ENCODE measurements at regions of chr7 and their contacts with region 1.

Region 1: DNA sequence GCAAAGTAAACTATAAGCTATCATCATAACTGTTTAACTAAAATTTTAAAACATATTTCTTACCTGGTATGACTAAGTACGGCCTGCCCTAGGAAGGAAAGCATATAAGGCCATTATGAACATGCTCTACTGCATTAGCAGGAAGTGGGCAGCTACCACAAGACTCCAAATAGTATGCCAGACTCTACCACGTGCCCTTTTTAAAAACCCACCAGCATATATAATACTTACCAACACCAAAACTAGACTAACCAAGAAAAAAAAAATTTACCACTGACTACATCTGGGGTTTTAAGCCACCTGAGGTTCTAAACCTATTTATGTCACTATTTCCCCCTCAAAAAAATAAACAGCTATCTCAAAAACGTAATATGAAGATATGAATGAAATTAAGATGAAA is 30.1 kb downstream of the NUDCD3 start:
- DNase-seq: peak; percentile 52
- H3K4me3 Mint-ChIP-seq: peak overlapping the region; percentile 33
- H3K27ac Mint-ChIP-seq: peak overlapping the region; percentile 79
- H3K4me1 Mint-ChIP-seq: peaks cover 57% of the 10 kb centered on the region
- H3K27me3 Mint-ChIP-seq: no peaks in the 10 kb centered on the region

Region 2: GRCh38 chr7:44257618-44258422 is 202.5 kb before region 1 on chr7:
- intact Hi-C with region 1: loop called (anchors 5 kb)
- DNase-seq: peak; percentile 64
- H3K4me3 Mint-ChIP-seq: peak overlapping the region; percentile 9
- H3K27ac Mint-ChIP-seq: peak overlapping the region; percentile 61
- H3K4me1 Mint-ChIP-seq: peaks cover 30% of the 10 kb centered on the region
- H3K27me3 Mint-ChIP-seq: no peaks in the 10 kb centered on the region

Region 3: GRCh38 chr7:44415047-44415446 is 45.3 kb before region 1 on chr7:
- intact Hi-C with region 1: loop called (anchors 5 kb)
- DNase-seq: no peak
- H3K4me3 Mint-ChIP-seq: no peak overlapping the region
- H3K27ac Mint-ChIP-seq: peak overlapping the region; percentile 43
- H3K4me1 Mint-ChIP-seq: peaks cover 13% of the 10 kb centered on the region
- H3K27me3 Mint-ChIP-seq: no peaks in the 10 kb centered on the region

Region 4: GRCh38 chr7:44449584-44449928 is 10.8 kb before region 1 on chr7:
- intact Hi-C with region 1: loop called (anchors 1 kb)
- DNase-seq: no peak
- H3K4me3 Mint-ChIP-seq: no peak overlapping the region
- H3K27ac Mint-ChIP-seq: peak overlapping the region; percentile 46
- H3K4me1 Mint-ChIP-seq: peaks cover 27% of the 10 kb centered on the region
- H3K27me3 Mint-ChIP-seq: no peaks in the 10 kb centered on the region

Region 5: GRCh38 chr7:44490351-44491200 is 30.3 kb after region 1 on chr7 and contains the start of gene NUDCD3:
- intact Hi-C with region 1: loop called (anchors 1 kb)
- DNase-seq: peak; percentile 77
- H3K4me3 Mint-ChIP-seq: peak within 1 kb of the TSS; percentile 85
- H3K27ac Mint-ChIP-seq: peak within 1 kb of the TSS; percentile 91
- H3K4me1 Mint-ChIP-seq: peaks cover 35% of the 10 kb centered on the region
- H3K27me3 Mint-ChIP-seq: no peaks in the 10 kb centered on the region
- total RNA-seq, gene NUDCD3: 86.8 and 90.2 TPM in 2 replicates

Region 6: GRCh38 chr7:44638611-44639557 is 178.6 kb after region 1 on chr7:
- intact Hi-C with region 1: loop called (anchors 10 kb)
- DNase-seq: peak; percentile 84
- H3K4me3 Mint-ChIP-seq: peak overlapping the region; percentile 79
- H3K27ac Mint-ChIP-seq: peak overlapping the region; percentile 99
- H3K4me1 Mint-ChIP-seq: peaks cover 70% of the 10 kb centered on the region
- H3K27me3 Mint-ChIP-seq: no peaks in the 10 kb centered on the region

Measured in activated T-helper 2 cell treated with anti-CD3 and anti-CD28 coated beads, Interferon-gamma antibody, Interleukin-2, Interleukin-4, amounts not matched to agents 10 μg/mL and 5 μg/mL and 100 μg/mL, durations not matched to agents 14 hours and 24 hours and 36 hours (primary cell).